H1 (cell line): ENCODE measurements at regions of chr16 and their contacts with region 1.

Region 1: GRCh38 chr16:164827-165538 is 795 bp upstream of the HBM start:
- DNase-seq: peak in 1 of 2 experiments; percentile 82
- H3K4me3 ChIP-seq: peak overlapping the region; percentile 14 to 59 (median 20); a peak in 7 of 8 replicates
- H3K27ac ChIP-seq: no peak overlapping the region
- H3K4me1 ChIP-seq: peaks cover 0 to 18% (median 16%) of the 10 kb centered on the region in 4 experiments; a peak in 6 of 7 replicates
- H3K27me3 ChIP-seq: peaks cover 33 to 58% (median 54%) of the 10 kb centered on the region in 4 experiments
- CTCF ChIP-seq: no peak
- EP300 ChIP-seq: no peak
- POLR2A ChIP-seq: no peak
- RAD21 ChIP-seq: no peak

Region 2: DNA sequence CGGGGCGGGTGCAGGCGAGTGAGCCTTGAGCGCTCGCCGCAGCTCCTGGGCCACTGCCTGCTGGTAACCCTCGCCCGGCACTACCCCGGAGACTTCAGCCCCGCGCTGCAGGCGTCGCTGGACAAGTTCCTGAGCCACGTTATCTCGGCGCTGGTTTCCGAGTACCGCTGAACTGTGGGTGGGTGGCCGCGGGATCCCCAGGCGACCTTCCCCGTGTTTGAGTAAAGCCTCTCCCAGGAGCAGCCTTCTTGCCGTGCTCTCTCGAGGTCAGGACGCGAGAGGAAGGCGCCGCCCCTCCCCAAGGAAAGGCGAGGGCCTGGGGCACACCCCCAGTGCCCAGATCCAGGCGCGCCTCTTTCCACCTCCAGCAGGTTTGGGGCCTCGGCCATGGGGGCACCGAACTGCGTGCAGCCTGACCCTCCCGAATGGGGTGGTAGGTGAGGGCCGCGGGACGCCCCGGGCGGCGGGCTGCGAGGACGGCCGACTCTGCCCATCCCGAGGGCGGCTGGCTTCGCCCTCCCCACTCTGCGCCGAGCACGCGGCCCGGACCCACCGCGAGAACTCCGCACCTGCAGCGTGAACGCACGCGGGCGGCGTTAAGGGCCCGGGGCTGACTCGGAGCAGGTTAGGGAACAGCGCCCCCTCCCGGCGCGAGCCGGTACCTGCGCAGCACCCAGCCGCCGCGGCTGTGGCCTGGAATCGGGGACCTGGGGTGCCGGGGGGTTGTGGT is 16.1 kb after region 1 on chr16:
- CTCF ChIA-PET with region 1: interaction called, 14 read pairs
- POLR2A ChIA-PET with region 1: interaction called, 29 read pairs
- DNase-seq: peak; percentile 54 to 99
- H3K4me3 ChIP-seq: peak overlapping the region; percentile 4 to 58 (median 20); a peak in 6 of 8 replicates
- H3K27ac ChIP-seq: no peak overlapping the region
- H3K4me1 ChIP-seq: peaks cover 0 to 5% (median 3%) of the 10 kb centered on the region in 4 experiments; a peak in 4 of 7 replicates
- H3K27me3 ChIP-seq: peaks cover 32 to 46% (median 41%) of the 10 kb centered on the region in 4 experiments
- CTCF ChIP-seq: peak; percentile 88 to 92 (median 91)
- EP300 ChIP-seq: 0 out of 3 replicates have a peak, but pooled peaks of 1 of the 2 experiments have one; percentile 6
- POLR2A ChIP-seq: peak in 1 of 2 experiments; percentile 22; a peak in 2 of 3 replicates
- RAD21 ChIP-seq: peak; percentile 81 to 82